Psoas muscle (tissue), 8 donors: ENCODE measurements at regions of chr21 and their contacts with region 1.

Region 1: GRCh38 chr21:34065027-34065426 is 8.4 kb upstream of the MRPS6 start:
- DNase-seq: no peak
- ATAC-seq: no peak
- H3K4me3 ChIP-seq: no peak overlapping the region
- H3K27ac ChIP-seq: no peak overlapping the region
- H3K4me1 ChIP-seq: no peaks in the 10 kb centered on the region
- H3K27me3 ChIP-seq: no peaks in the 10 kb centered on the region
- CTCF ChIP-seq: no peak

Region 2: GRCh38 chr21:33434770-33435360 is 630.2 kb before region 1 on chr21:
- intact Hi-C with region 1: no loop called
- DNase-seq: no peak
- ATAC-seq: peak; percentile 89 to 97 (median 96)
- H3K4me3 ChIP-seq: no peak overlapping the region
- H3K27ac ChIP-seq: peak overlapping the region; percentile 79
- H3K4me1 ChIP-seq: peaks cover 12% of the 10 kb centered on the region
- H3K27me3 ChIP-seq: no peaks in the 10 kb centered on the region
- CTCF ChIP-seq: no peak

Region 3: GRCh38 chr21:33980297-33980803 is 84.7 kb before region 1 on chr21:
- intact Hi-C with region 1: loop called in 1 of 2 experiments (anchors 5 kb)
- DNase-seq: no peak
- ATAC-seq: peak in 2 of 4 donors; percentile 12 to 64
- H3K4me3 ChIP-seq: no peak overlapping the region
- H3K27ac ChIP-seq: no peak overlapping the region
- H3K4me1 ChIP-seq: peaks cover 13% of the 10 kb centered on the region
- H3K27me3 ChIP-seq: no peaks in the 10 kb centered on the region
- CTCF ChIP-seq: no peak

Region 4: DNA sequence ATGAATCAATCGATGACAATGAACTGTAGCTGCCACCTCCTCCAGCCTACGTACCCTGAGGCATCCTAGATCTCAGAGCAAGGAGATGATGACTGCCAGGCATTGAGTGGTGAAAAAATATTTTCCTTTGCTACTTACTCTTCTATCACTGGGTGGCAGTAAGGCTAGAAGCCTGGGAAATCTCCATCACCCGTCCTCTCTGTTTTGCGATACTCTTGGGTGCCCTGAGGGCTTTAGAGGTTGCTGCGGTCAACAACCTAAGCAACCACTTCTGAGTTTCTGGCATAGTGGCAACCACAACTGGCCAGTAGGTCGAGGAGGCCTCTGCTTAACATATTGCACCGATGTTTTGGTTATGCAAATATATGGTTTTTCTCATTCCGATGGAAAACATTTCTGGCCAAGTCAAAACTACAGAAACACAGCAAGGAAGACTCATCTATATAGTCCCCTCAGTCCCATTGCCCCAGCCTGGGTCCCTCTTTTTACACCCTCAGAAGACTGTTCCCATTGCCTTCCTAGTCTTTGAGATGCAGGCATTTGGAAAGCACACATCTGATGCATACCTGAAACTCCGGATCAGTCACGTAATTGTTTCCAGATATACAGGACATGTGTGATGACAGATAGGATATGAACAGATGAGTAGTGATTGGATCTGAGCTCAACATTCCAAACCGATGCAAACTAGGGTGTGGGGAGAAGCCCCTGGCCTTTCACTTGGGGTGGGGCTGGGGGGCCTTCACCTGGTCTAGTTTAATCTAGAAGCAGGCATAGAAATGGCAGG is 847.3 kb after region 1 on chr21:
- intact Hi-C with region 1: no loop called
- DNase-seq: no peak
- ATAC-seq: no peak
- H3K4me3 ChIP-seq: no peak overlapping the region
- H3K27ac ChIP-seq: no peak overlapping the region
- H3K4me1 ChIP-seq: no peaks in the 10 kb centered on the region
- H3K27me3 ChIP-seq: no peaks in the 10 kb centered on the region
- CTCF ChIP-seq: no peak